Calu3 (cell line): ENCODE measurements at regions of chr11 and their contacts with region 1.

Region 1: GRCh38 chr11:67507864-67508485 is at the start of gene CDK2AP2:
- DNase-seq: peak; percentile 99
- H3K4me3 Mint-ChIP-seq: peak within 1 kb of the TSS; percentile 91
- H3K27ac Mint-ChIP-seq: peak within 1 kb of the TSS; percentile 99
- H3K4me1 Mint-ChIP-seq: peaks cover 31% of the 10 kb centered on the region
- H3K27me3 Mint-ChIP-seq: peaks cover 13% of the 10 kb centered on the region
- CTCF ChIP-seq: no peak
- total RNA-seq, gene CDK2AP2: 59.7 and 64.7 TPM in 2 replicates

Region 2: DNA sequence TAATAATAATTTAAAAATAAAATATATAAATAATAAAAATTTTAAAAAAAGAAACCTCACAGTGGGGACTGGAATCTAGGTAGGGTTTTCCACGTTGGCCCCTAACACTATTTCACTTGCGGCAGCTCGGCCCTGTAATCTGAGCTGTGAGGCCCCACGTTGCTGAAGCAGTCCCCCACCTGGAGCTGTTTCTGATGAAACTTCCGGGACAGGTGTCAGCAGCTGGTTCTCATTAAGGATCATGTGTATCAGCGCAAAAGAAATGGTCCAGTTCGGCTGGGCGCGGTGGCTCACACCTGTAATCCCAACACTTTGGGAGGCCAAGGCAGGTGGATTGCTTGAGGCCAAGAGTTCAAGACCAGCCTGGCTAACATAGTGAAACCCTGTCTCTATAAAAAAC is 434.1 kb before region 1 on chr11:
- CTCF ChIA-PET with region 1: no interaction called
- intact Hi-C with region 1: no loop called
- DNase-seq: no peak
- H3K4me3 Mint-ChIP-seq: no peak overlapping the region
- H3K27ac Mint-ChIP-seq: no peak overlapping the region
- H3K4me1 Mint-ChIP-seq: peaks cover 3% of the 10 kb centered on the region
- H3K27me3 Mint-ChIP-seq: no peaks in the 10 kb centered on the region
- CTCF ChIP-seq: no peak

Region 3: GRCh38 chr11:67428052-67428914 is 79.7 kb before region 1 on chr11 and contains the start of gene RPS6KB2:
- CTCF ChIA-PET with region 1: no interaction called
- intact Hi-C with region 1: loop called (anchors 10 kb)
- DNase-seq: peak; percentile 98
- H3K4me3 Mint-ChIP-seq: peak within 1 kb of the TSS; percentile 93
- H3K27ac Mint-ChIP-seq: peak within 1 kb of the TSS; percentile 92
- H3K4me1 Mint-ChIP-seq: peaks cover under 1% of the 10 kb centered on the region
- H3K27me3 Mint-ChIP-seq: no peaks in the 10 kb centered on the region
- CTCF ChIP-seq: no peak
- total RNA-seq, gene RPS6KB2: 44.3 and 47.5 TPM in 2 replicates

Region 4: DNA sequence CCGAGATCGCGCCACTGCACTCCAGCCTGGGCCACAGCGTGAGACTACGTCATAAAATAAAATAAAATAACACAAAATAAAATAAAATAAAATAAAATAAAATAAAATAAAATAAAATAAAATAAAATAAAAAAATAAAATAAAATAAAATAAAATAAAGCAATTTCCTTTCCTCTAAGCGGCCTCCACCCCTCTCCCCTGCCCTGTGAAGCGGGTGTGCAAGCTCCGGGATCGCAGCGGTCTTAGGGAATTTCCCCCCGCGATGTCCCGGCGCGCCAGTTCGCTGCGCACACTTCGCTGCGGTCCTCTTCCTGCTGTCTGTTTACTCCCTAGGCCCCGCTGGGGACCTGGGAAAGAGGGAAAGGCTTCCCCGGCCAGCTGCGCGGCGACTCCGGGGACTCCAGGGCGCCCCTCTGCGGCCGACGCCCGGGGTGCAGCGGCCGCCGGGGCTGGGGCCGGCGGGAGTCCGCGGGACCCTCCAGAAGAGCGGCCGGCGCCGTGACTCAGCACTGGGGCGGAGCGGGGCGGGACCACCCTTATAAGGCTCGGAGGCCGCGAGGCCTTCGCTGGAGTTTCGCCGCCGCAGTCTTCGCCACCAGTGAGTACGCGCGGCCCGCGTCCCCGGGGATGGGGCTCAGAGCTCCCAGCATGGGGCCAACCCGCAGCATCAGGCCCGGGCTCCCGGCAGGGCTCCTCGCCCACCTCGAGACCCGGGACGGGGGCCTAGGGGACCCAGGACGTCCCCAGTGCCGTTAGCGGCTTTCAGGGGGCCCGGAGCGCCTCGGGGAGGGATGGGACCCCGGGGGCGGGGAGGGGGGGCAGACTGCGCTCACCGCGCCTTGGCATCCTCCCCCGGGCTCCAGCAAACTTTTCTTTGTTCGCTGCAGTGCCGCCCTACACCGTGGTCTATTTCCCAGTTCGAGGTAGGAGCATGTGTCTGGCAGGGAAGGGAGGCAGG is 75.6 kb after region 1 on chr11 and contains the start of gene GSTP1:
- CTCF ChIA-PET with region 1: no interaction called
- intact Hi-C with region 1: loop called (anchors 2 kb)
- DNase-seq: peak; percentile 94
- H3K4me3 Mint-ChIP-seq: peak within 1 kb of the TSS; percentile 77
- H3K27ac Mint-ChIP-seq: peak within 1 kb of the TSS; percentile 74
- H3K4me1 Mint-ChIP-seq: peaks cover 61% of the 10 kb centered on the region
- H3K27me3 Mint-ChIP-seq: no peaks in the 10 kb centered on the region
- CTCF ChIP-seq: peak; percentile 60
- total RNA-seq, gene GSTP1: 777 and 838 TPM in 2 replicates